Heart left ventricle (tissue), 16 donors: ENCODE measurements at regions of chr16 and their contacts with region 1.

Region 1: GRCh38 chr16:626787-627186 is 4.0 kb upstream of the WFIKKN1 start:
- DNase-seq: peak in 1 of 5 donors; percentile 26
- ATAC-seq: no peak
- H3K4me3 ChIP-seq: no peak overlapping the region
- H3K27ac ChIP-seq: peak overlapping the region in 1 of 12 donors; percentile 57
- H3K4me1 ChIP-seq: peaks cover 0 to 25% (median 21%) of the 10 kb centered on the region in 12 donors
- H3K27me3 ChIP-seq: no peaks in the 10 kb centered on the region
- CTCF ChIP-seq: no peak
- POLR2A ChIP-seq: no peak

Region 2: DNA sequence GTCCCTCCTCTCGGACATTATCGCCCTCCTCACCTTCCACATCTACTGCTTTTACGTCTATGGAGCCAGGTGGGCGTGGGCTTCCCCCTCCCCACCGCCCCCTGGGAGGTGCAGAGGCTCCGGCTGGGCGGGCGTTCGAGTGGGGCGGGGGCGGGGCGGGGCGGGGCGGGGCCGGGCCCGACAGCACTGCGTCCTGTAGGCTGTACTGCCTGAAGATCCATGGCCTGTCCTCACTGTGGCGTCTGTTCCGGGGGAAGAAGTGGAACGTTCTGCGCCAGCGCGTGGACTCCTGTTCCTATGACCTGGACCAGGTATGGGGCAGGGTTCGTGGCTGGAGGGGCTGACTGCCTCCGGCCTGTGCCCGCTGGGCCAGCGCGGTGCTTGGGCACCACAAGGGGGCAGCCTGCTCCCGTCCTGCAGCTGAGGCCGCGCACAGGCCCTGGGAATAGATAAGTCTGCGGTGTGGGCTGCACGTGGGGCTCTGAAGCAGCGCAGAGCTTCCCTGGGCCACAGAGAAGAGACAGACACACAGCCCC is 47.8 kb before region 1 on chr16:
- intact Hi-C with region 1: loop called in 1 of 10 experiments (anchors 5 kb)
- DNase-seq: peak; percentile 58 to 85 (median 66)
- ATAC-seq: peak; percentile 63 to 82 (median 78)
- H3K4me3 ChIP-seq: peak overlapping the region in 6 of 12 donors; percentile 10 to 45 (median 26)
- H3K27ac ChIP-seq: no peak overlapping the region
- H3K4me1 ChIP-seq: peaks cover 0 to 17% (median 0%) of the 10 kb centered on the region in 12 donors
- H3K27me3 ChIP-seq: no peaks in the 10 kb centered on the region
- CTCF ChIP-seq: peak; percentile 65 to 89 (median 74)
- POLR2A ChIP-seq: no peak

Region 3: GRCh38 chr16:595942-596735 is 30.6 kb before region 1 on chr16:
- intact Hi-C with region 1: loop called in 3 of 10 experiments (anchors 5 kb)
- DNase-seq: peak in 1 of 5 donors; percentile 19
- ATAC-seq: no peak
- H3K4me3 ChIP-seq: no peak overlapping the region
- H3K27ac ChIP-seq: no peak overlapping the region
- H3K4me1 ChIP-seq: peaks cover 0 to 28% (median 8%) of the 10 kb centered on the region in 12 donors
- H3K27me3 ChIP-seq: no peaks in the 10 kb centered on the region
- CTCF ChIP-seq: no peak
- POLR2A ChIP-seq: no peak